ENCODE measurements at regions of chr9 and their contacts with region 1.

Region 1: GRCh38 chr9:128370826-128371621 is at the start of gene URM1:
- DNase-seq: peak; percentile 97
- ATAC-seq: peak; percentile 97
- H3K4me3 Mint-ChIP-seq: peak within 1 kb of the TSS; percentile 95
- H3K27ac Mint-ChIP-seq: peak within 1 kb of the TSS; percentile 91
- H3K4me1 Mint-ChIP-seq: peaks cover 27% of the 10 kb centered on the region
- H3K27me3 Mint-ChIP-seq: no peaks in the 10 kb centered on the region
- total RNA-seq, gene URM1: 61.4 to 81.0 TPM

Region 2: DNA sequence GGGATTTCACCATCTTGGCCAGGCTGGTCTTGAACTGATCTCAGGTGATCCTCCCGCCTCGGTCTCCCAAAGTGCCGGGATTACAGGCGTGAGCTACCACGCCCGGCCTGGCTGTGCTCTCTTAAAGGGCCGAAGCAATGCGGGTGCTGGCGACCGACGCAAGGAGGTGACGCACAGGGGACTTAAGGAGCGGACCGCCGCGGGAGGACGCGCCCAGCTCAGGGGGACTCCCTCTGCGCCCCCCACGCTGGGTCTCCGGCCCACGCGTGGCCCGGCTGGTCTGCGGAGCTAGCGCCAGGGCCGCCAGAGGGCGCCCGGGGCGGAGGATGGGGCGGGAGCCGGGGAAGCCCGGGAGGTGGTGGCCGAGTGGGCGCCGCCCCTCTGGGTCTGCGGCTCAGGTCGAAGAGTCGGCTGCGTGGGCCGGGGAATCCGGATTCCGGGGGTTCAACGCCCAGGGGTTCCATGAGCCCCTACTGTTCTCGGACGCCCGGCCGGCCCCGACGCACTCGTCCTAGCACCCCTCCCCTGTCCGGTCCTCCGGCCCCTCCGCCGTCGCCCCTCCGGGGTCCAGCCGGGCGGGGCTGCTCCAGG is 49.1 kb after region 1 on chr9:
- CTCF ChIA-PET with region 1: interaction called, 10 read pairs
- DNase-seq: peak; percentile 77
- ATAC-seq: peak; percentile 87
- H3K4me3 Mint-ChIP-seq: peak overlapping the region; percentile 70
- H3K27ac Mint-ChIP-seq: no peak overlapping the region
- H3K4me1 Mint-ChIP-seq: peaks cover 29% of the 10 kb centered on the region
- H3K27me3 Mint-ChIP-seq: peaks cover 35% of the 10 kb centered on the region

Region 3: GRCh38 chr9:128677794-128678193 is 306.8 kb after region 1 on chr9:
- CTCF ChIA-PET with region 1: no interaction called
- DNase-seq: no peak
- ATAC-seq: no peak
- H3K4me3 Mint-ChIP-seq: no peak overlapping the region
- H3K27ac Mint-ChIP-seq: no peak overlapping the region
- H3K4me1 Mint-ChIP-seq: peaks cover 6% of the 10 kb centered on the region
- H3K27me3 Mint-ChIP-seq: no peaks in the 10 kb centered on the region

Measured in activated CD8-positive, alpha-beta memory T cell treated with anti-CD3 and anti-CD28 coated beads, Interleukin-2, amount 10 ng/mL, durations not matched to agents 7 days and 5 days (primary cell).